Caco-2 (cell line): ENCODE measurements at regions of chr5 and their contacts with region 1.

Region 1: GRCh38 chr5:77143998-77144836 is 57.1 kb upstream of the ZBED3 start:
- DNase-seq: peak; percentile 73 to 79
- H3K4me3 ChIP-seq: no peak overlapping the region
- H3K4me3 Mint-ChIP-seq: no peak overlapping the region
- H3K27ac Mint-ChIP-seq: no peak overlapping the region
- H3K4me1 ChIP-seq: no peaks in the 10 kb centered on the region
- H3K4me1 Mint-ChIP-seq: peaks cover 7% of the 10 kb centered on the region
- H3K27me3 ChIP-seq: no peaks in the 10 kb centered on the region
- H3K27me3 Mint-ChIP-seq: no peaks in the 10 kb centered on the region
- CTCF ChIP-seq: peak; percentile 80 to 93

Region 2: GRCh38 chr5:77239126-77239741 is 95.0 kb after region 1 on chr5:
- CTCF ChIA-PET with region 1: interaction called, 4 read pairs
- POLR2A ChIA-PET with region 1: no interaction called
- intact Hi-C with region 1: loop called (anchors 1 kb)
- DNase-seq: peak in 1 of 2 experiments; percentile 25
- H3K4me3 ChIP-seq: no peak overlapping the region
- H3K4me3 Mint-ChIP-seq: no peak overlapping the region
- H3K27ac Mint-ChIP-seq: no peak overlapping the region
- H3K4me1 ChIP-seq: no peaks in the 10 kb centered on the region
- H3K4me1 Mint-ChIP-seq: peaks cover 7% of the 10 kb centered on the region
- H3K27me3 ChIP-seq: no peaks in the 10 kb centered on the region
- H3K27me3 Mint-ChIP-seq: no peaks in the 10 kb centered on the region
- CTCF ChIP-seq: peak; percentile 52

Region 3: GRCh38 chr5:77337686-77338085 is 193.5 kb after region 1 on chr5:
- CTCF ChIA-PET with region 1: no interaction called
- POLR2A ChIA-PET with region 1: no interaction called
- intact Hi-C with region 1: loop called (anchors 10 kb)
- DNase-seq: no peak
- H3K4me3 ChIP-seq: no peak overlapping the region
- H3K4me3 Mint-ChIP-seq: no peak overlapping the region
- H3K27ac Mint-ChIP-seq: no peak overlapping the region
- H3K4me1 ChIP-seq: no peaks in the 10 kb centered on the region
- H3K4me1 Mint-ChIP-seq: no peaks in the 10 kb centered on the region
- H3K27me3 ChIP-seq: no peaks in the 10 kb centered on the region
- H3K27me3 Mint-ChIP-seq: no peaks in the 10 kb centered on the region
- CTCF ChIP-seq: no peak

Region 4: DNA sequence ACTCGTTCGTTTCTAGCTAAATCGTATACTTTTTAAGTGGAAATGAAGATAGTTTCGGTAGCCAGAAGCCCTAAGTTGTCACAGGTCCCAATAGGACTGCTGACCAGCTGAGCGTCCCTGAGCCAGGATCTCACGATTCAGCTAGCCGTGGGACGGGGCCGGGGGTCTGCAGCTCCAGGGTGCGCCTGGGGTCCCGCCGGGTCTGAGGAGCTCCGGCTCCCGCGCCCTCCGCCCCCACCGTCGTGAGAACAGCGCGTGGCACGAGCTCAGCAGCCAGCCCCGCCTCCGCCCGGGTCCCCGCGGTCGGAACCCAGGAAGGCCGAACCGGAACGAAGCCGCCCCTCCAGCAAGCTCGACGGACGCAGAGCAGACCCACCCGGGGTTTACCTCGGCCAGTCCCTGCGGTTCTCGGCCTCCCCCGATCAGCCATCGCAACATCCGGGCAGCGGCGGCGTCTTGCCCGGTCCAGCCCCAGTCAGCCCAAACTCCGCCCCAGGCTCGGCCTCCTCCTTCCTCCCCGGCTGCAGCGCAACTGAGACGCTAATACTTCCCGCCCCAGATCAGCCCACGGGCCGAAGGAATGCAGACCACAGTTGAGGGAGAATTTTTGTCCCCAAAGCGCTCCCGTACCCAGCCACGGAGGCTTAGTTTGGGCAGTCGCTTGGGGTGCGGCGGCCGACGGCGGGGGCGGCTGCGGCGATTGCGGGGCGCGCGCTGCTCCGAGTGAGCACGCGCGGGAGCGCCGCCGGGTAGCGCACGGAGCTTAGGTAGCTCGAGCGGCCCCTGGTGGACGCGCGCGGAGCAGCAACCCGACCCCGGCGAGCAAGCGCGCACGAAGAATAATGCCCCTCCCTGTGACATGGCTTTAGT is 347.8 kb after region 1 on chr5 and contains the start of gene WDR41:
- CTCF ChIA-PET with region 1: no interaction called
- POLR2A ChIA-PET with region 1: no interaction called
- intact Hi-C with region 1: loop called (anchors 2 kb)
- DNase-seq: peak; percentile 89 to 91
- H3K4me3 ChIP-seq: peak within 1 kb of the TSS; percentile 81
- H3K4me3 Mint-ChIP-seq: peak within 1 kb of the TSS; percentile 97
- H3K27ac Mint-ChIP-seq: peak within 1 kb of the TSS; percentile 99
- H3K4me1 ChIP-seq: no peaks in the 10 kb centered on the region
- H3K4me1 Mint-ChIP-seq: no peaks in the 10 kb centered on the region
- H3K27me3 ChIP-seq: no peaks in the 10 kb centered on the region
- H3K27me3 Mint-ChIP-seq: peaks cover 13% of the 10 kb centered on the region
- CTCF ChIP-seq: peak; percentile 90 to 91
- total RNA-seq, gene WDR41: 64.1 and 66.2 TPM in 2 replicates

Region 5: DNA sequence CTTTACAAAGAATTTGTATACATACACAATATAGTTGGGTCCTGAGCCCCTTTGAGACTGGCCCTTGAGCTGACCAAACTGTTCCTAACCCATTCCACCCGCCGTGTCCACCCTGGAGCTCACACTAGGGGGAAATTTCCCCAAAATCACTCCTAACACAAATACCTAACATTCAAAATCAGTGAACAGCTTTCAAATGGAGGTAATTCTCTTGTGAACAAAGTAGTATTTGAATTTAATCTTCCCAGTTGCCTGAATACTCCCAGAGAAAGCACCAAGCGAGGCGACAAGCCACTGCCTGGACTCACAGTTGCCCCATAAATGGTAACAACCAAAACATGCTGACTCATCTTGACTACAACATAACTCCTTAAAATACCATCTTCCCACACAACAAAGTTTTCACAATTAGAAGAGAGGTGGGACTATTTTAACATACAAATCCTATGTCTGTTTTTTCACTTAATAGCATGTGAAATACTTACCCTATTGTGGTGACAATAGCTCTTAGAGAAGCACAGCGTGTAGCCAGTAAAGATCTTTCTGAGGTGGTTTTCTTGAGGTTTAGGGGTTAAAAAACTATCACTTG is 1184.5 kb after region 1 on chr5:
- CTCF ChIA-PET with region 1: no interaction called
- POLR2A ChIA-PET with region 1: no interaction called
- intact Hi-C with region 1: no loop called
- DNase-seq: no peak
- H3K4me3 ChIP-seq: no peak overlapping the region
- H3K4me3 Mint-ChIP-seq: no peak overlapping the region
- H3K27ac Mint-ChIP-seq: no peak overlapping the region
- H3K4me1 ChIP-seq: peaks cover 9% of the 10 kb centered on the region; the same call in 1 of the 2 replicates
- H3K4me1 Mint-ChIP-seq: peaks cover 9% of the 10 kb centered on the region
- H3K27me3 ChIP-seq: no peaks in the 10 kb centered on the region
- H3K27me3 Mint-ChIP-seq: no peaks in the 10 kb centered on the region
- CTCF ChIP-seq: no peak